Psoas muscle (tissue), 8 donors: ENCODE measurements at regions of chr19 and their contacts with region 1.

Region 1: DNA sequence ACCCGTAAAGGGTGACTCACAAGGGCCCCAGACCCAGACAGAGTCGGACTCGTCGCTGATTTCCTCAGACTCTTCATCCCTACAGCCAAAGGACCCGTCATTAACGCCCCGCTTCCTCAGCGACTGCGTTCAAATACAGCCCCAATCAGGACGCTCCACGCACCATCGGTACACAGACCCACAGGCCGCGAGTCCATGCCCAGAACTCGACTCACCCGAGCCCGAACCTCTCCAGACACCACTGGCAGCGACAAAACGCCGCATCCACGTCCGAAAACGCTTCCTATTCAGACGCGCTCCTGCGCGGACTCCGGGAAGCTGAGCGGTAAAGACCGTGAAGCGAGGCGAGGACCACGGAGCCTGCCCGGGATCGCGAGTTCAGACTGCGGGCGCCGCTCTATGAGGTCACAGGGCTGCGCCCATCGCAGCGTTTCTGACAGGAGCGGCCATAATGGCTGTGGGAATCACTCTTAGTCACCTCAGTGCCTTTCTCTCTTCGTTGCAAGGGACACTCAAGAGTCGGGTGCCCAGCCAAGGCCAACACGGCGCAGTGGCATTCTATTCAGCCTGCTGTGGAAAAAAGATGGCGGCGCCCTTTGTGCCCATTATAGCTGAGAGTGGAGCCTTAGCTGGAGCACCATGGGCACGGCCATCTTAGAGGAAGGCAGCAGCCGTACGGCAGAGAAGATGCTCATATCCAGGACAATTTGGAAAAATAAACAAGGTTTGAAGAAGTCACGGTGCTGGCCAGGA is at the start of gene ZNF614:
- DNase-seq: peak; percentile 88 to 94
- ATAC-seq: peak; percentile 98
- H3K4me3 ChIP-seq: peak within 1 kb of the TSS; percentile 92
- H3K27ac ChIP-seq: peak within 1 kb of the TSS; percentile 96
- H3K4me1 ChIP-seq: peaks cover 5% of the 10 kb centered on the region
- H3K27me3 ChIP-seq: no peaks in the 10 kb centered on the region
- CTCF ChIP-seq: no peak
- total RNA-seq, gene ZNF614: 3.8 to 6.2 (median 4.5) TPM

Region 2: GRCh38 chr19:51978882-51979281 is 49.3 kb before region 1 on chr19:
- intact Hi-C with region 1: no loop called
- DNase-seq: no peak
- ATAC-seq: no peak
- H3K4me3 ChIP-seq: no peak overlapping the region
- H3K27ac ChIP-seq: no peak overlapping the region
- H3K4me1 ChIP-seq: no peaks in the 10 kb centered on the region
- H3K27me3 ChIP-seq: no peaks in the 10 kb centered on the region
- CTCF ChIP-seq: no peak

Region 3: GRCh38 chr19:52007806-52008557 is 20.2 kb before region 1 on chr19 and contains the start of gene ZNF615:
- intact Hi-C with region 1: loop called in 1 of 2 experiments (anchors 2 kb)
- DNase-seq: peak; percentile 89 to 92
- ATAC-seq: peak; percentile 98 to 100 (median 99)
- H3K4me3 ChIP-seq: peak within 1 kb of the TSS; percentile 79
- H3K27ac ChIP-seq: peak within 1 kb of the TSS; percentile 86
- H3K4me1 ChIP-seq: peaks cover 3% of the 10 kb centered on the region
- H3K27me3 ChIP-seq: peaks cover 0 to 1% (median 0%) of the 10 kb centered on the region in 3 donors
- CTCF ChIP-seq: no peak
- total RNA-seq, gene ZNF615: 4.5 to 7.4 (median 5.2) TPM

Region 4: GRCh38 chr19:52048555-52049501 is 20.6 kb after region 1 on chr19 and contains the start of gene ZNF432:
- intact Hi-C with region 1: loop called (anchors 2 kb)
- DNase-seq: peak; percentile 96 to 97
- ATAC-seq: peak; percentile 99
- H3K4me3 ChIP-seq: peak within 1 kb of the TSS; percentile 74
- H3K27ac ChIP-seq: peak within 1 kb of the TSS; percentile 92
- H3K4me1 ChIP-seq: no peaks in the 10 kb centered on the region
- H3K27me3 ChIP-seq: no peaks in the 10 kb centered on the region
- CTCF ChIP-seq: no peak
- total RNA-seq, gene ZNF432: 3.1 to 6.4 (median 4.5) TPM

Region 5: DNA sequence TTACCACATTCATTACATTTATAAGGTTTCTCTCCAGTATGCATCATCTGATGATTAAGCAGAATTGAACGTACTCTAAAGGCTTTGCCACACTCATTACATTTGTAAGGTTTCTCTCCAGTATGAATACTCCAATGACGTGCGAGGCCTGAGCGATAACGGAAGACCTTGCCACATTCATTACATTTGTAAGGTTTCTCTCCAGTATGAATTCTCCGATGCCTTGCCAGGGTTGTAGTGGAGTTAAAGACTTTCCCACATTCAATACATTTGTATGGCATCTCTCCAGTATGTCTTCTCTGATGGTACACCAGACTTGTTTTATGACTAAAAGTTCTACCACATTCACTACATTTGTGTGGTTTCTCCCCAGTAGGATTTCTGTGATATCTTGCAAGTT is 37.2 kb after region 1 on chr19:
- intact Hi-C with region 1: no loop called
- DNase-seq: no peak
- ATAC-seq: no peak
- H3K4me3 ChIP-seq: no peak overlapping the region
- H3K27ac ChIP-seq: no peak overlapping the region
- H3K4me1 ChIP-seq: no peaks in the 10 kb centered on the region
- H3K27me3 ChIP-seq: no peaks in the 10 kb centered on the region
- CTCF ChIP-seq: no peak

Region 6: GRCh38 chr19:52221831-52222375 is 193.7 kb after region 1 on chr19:
- intact Hi-C with region 1: no loop called
- DNase-seq: no peak
- ATAC-seq: no peak
- H3K4me3 ChIP-seq: no peak overlapping the region
- H3K27ac ChIP-seq: no peak overlapping the region
- H3K4me1 ChIP-seq: no peaks in the 10 kb centered on the region
- H3K27me3 ChIP-seq: no peaks in the 10 kb centered on the region
- CTCF ChIP-seq: no peak